ENCODE measurements at regions of chr2 and their contacts with region 1.

Region 1: DNA sequence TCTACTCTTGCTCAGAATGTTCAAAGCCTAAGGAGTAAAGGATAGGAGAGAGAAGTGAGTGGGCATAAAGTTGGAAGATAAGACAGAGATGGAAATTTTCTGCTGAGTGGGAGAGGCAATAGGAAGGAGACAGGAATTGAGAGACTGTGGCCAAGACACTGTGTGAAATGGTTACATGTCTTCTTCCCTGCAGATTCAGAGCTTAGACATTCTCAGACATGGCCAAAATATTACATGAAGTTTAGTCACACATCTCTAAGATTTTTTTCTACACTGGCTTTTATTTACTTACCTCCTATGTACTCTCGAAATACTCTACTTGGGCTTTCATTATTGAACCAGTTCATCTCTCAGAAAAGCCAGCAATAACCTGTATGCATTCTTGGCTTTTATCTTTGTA is 363.0 kb upstream of the FANCL start:
- DNase-seq: no peak
- H3K4me3 ChIP-seq: no peak overlapping the region
- H3K27ac ChIP-seq: no peak overlapping the region
- H3K4me1 ChIP-seq: peaks cover 3% of the 10 kb centered on the region
- H3K27me3 ChIP-seq: no peaks in the 10 kb centered on the region
- CTCF ChIP-seq: no peak

Region 2: GRCh38 chr2:58638256-58638805 is 34.2 kb after region 1 on chr2:
- CTCF ChIA-PET with region 1: no interaction called
- dilution Hi-C with region 1: no loop called
- in situ Hi-C with region 1: no loop called
- intact Hi-C with region 1: loop called (anchors 2 kb)
- DNase-seq: peak; percentile 21
- H3K4me3 ChIP-seq: no peak overlapping the region
- H3K27ac ChIP-seq: no peak overlapping the region
- H3K4me1 ChIP-seq: peaks cover 29% of the 10 kb centered on the region
- H3K27me3 ChIP-seq: no peaks in the 10 kb centered on the region
- CTCF ChIP-seq: no peak

Measured in mammary epithelial cell (primary cell).